Natural killer cell (primary cell): ENCODE measurements at regions of chr17 and their contacts with region 1.

Region 1: DNA sequence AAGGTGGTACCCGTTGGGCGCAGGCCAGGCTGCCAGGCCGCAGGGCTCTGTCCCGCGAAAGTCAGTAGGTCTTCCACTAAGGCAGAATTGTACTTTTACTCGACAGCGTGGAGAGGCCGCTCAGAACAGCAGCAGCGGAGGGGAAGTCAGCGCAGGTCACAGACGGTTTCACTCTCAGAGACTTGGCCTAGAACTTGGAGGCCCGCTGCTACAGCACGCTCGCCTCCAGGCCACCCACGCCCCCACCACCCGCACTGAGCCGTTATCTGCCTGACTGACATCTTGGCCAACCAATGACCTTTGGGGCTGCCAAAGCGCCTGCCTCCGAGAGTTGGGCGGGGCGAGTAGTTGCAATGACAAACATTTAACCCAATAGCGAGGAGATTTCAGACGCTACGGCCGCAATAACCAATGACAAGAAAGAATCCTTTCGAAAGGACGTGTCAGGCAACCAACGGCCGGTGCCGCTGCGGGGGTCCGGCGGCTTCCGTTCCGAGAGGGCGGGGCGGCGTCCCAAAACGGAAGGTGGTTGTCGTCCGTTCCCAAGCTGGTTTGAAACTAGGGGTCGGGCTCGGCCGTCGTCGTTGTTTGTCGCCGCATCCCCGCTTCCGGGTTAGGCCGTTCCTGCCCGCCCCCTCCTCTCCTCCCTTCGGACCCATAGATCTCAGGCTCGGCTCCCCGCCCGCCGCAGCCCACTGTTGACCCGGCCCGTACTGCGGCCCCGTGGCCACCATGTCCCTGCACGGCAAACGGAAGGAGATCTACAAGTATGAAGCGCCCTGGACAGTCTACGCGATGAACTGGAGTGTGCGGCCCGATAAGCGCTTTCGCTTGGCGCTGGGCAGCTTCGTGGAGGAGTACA is at the start of gene DCAF7:
- DNase-seq: peak; percentile 98 to 100
- ATAC-seq: peak; percentile 90 to 98 (median 91)
- H3K4me3 ChIP-seq: peak within 1 kb of the TSS; percentile 98
- H3K4me3 Mint-ChIP-seq: peak within 1 kb of the TSS; percentile 82
- H3K27ac ChIP-seq: peak within 1 kb of the TSS; percentile 99
- H3K27ac Mint-ChIP-seq: peak within 1 kb of the TSS; percentile 95 to 97
- H3K4me1 ChIP-seq: peaks cover 29% of the 10 kb centered on the region
- H3K4me1 Mint-ChIP-seq: peaks cover 37 to 53% of the 10 kb centered on the region in 2 donors
- H3K27me3 ChIP-seq: no peaks in the 10 kb centered on the region
- H3K27me3 Mint-ChIP-seq: no peaks in the 10 kb centered on the region
- CTCF ChIP-seq: no peak
- total RNA-seq, gene DCAF7: 55.5 to 83.5 (median 72.2) TPM

Region 2: DNA sequence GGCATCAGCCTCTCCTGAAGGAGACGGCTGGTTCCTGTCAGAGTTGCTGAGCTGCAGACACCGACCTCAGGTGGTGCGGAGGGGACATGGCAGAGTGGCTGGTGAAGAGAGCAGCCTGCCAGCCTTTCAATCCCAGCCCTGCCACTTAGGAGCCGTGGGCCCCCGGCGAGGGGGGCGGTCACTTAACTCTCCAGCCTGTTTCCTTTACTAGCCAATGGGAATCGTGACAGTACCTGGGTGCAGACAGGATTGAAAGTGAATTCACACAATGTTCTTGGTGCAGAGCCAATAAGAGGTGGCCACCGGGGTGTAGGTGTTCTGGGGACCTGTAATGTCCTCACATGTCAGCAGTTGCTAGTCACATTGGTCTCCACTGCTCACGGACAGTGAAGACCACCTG is 59.9 kb before region 1 on chr17:
- intact Hi-C with region 1: no loop called
- DNase-seq: no peak
- ATAC-seq: no peak
- H3K4me3 ChIP-seq: no peak overlapping the region
- H3K4me3 Mint-ChIP-seq: no peak overlapping the region
- H3K27ac ChIP-seq: no peak overlapping the region
- H3K27ac Mint-ChIP-seq: no peak overlapping the region
- H3K4me1 ChIP-seq: no peaks in the 10 kb centered on the region
- H3K4me1 Mint-ChIP-seq: no peaks in the 10 kb centered on the region
- H3K27me3 ChIP-seq: no peaks in the 10 kb centered on the region
- H3K27me3 Mint-ChIP-seq: no peaks in the 10 kb centered on the region
- CTCF ChIP-seq: no peak

Region 3: DNA sequence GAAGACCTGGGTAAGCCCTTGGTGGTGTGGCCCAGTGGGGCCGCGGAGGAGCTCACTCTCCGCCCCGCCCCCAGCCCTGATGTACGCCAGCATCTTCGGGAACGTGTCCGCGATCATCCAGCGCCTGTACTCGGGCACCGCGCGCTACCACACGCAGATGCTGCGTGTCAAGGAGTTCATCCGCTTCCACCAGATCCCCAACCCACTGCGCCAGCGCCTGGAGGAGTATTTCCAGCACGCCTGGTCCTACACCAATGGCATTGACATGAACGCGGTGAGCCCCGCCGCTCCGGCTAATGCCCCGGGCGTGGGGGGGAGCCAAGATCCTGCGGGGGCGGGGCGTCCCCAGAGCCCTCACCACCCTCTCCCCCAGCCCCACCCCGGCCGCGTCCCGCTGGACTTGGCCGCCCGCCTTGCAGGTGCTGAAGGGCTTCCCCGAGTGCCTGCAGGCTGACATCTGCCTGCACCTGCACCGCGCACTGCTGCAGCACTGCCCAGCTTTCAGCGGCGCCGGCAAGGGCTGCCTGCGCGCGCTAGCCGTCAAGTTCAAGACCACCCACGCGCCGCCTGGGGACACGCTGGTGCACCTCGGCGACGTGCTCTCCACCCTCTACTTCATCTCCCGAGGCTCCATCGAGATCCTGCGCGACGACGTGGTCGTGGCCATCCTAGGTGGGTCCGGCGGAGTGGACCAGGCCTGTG is 12.0 kb before region 1 on chr17:
- intact Hi-C with region 1: no loop called
- DNase-seq: no peak
- ATAC-seq: peak in 1 of 3 donors; percentile 30
- H3K4me3 ChIP-seq: no peak overlapping the region
- H3K4me3 Mint-ChIP-seq: no peak overlapping the region
- H3K27ac ChIP-seq: no peak overlapping the region
- H3K27ac Mint-ChIP-seq: no peak overlapping the region
- H3K4me1 ChIP-seq: no peaks in the 10 kb centered on the region
- H3K4me1 Mint-ChIP-seq: no peaks in the 10 kb centered on the region
- H3K27me3 ChIP-seq: peaks cover 7% of the 10 kb centered on the region
- H3K27me3 Mint-ChIP-seq: peaks cover 23 to 27% of the 10 kb centered on the region in 2 donors
- CTCF ChIP-seq: no peak

Region 4: GRCh38 chr17:63598281-63598680 is 48.1 kb after region 1 on chr17:
- intact Hi-C with region 1: loop called (anchors 1 kb)
- DNase-seq: peak in 1 of 2 donors; percentile 61
- ATAC-seq: peak; percentile 48 to 61 (median 60)
- H3K4me3 ChIP-seq: no peak overlapping the region
- H3K4me3 Mint-ChIP-seq: peak overlapping the region; percentile 81
- H3K27ac ChIP-seq: no peak overlapping the region
- H3K27ac Mint-ChIP-seq: peak overlapping the region; percentile 76 to 84
- H3K4me1 ChIP-seq: peaks cover 31% of the 10 kb centered on the region
- H3K4me1 Mint-ChIP-seq: peaks cover 43 to 47% of the 10 kb centered on the region in 2 donors
- H3K27me3 ChIP-seq: no peaks in the 10 kb centered on the region
- H3K27me3 Mint-ChIP-seq: no peaks in the 10 kb centered on the region
- CTCF ChIP-seq: no peak

Region 5: DNA sequence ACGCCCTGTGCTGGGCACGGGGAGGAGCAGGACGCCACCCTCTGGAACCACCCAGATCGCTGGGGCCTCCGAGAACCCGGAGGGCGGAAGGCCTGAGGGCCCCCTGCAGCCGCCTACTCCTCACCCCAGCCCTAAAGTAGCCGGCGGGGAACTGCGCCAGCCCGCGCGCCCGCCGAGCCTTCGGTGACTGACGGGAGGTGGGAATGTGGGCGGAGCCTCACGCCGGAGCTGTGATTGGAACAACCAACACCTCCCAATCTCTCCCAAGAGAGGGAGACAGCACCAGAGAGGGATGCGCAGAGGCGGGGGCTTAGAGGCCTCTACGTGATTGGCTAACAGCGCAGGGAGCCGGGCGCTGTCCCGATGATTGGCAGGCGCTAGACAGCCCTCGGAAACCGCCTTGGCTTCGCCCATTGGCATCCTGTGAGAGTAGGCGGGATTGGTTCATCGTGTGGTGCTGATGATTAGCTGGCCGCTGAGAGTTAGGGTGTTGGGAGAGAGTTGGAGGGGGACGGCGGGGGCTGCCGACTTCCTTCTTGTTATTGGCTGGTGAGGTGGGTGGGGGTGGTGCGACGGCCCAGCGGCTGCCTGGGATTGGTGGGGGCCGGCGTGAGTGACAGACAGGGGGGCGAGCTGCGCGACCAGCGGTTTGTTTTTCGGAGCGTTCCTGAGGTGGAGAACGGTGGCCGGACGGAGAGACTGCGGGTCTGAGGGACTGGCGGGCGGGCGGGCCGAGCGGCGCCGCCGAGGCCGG is 71.8 kb after region 1 on chr17 and contains the start of gene MAP3K3:
- intact Hi-C with region 1: loop called (anchors 5 kb)
- DNase-seq: peak; percentile 92 to 99
- ATAC-seq: peak; percentile 88 to 97 (median 88)
- H3K4me3 ChIP-seq: peak within 1 kb of the TSS; percentile 72
- H3K4me3 Mint-ChIP-seq: peak within 1 kb of the TSS; percentile 99
- H3K27ac ChIP-seq: peak within 1 kb of the TSS; percentile 68
- H3K27ac Mint-ChIP-seq: peak within 1 kb of the TSS; percentile 83 to 91
- H3K4me1 ChIP-seq: peaks cover 13% of the 10 kb centered on the region
- H3K4me1 Mint-ChIP-seq: peaks cover 36 to 43% of the 10 kb centered on the region in 2 donors
- H3K27me3 ChIP-seq: no peaks in the 10 kb centered on the region
- H3K27me3 Mint-ChIP-seq: no peaks in the 10 kb centered on the region
- CTCF ChIP-seq: no peak
- total RNA-seq, gene MAP3K3: 82.0 to 89.2 (median 88.5) TPM